Activated B cell treated with CpG ODN at 0.5 μM for 24 hours (primary cell): ENCODE measurements at regions of chr2 and their contacts with region 1.

Region 1: DNA sequence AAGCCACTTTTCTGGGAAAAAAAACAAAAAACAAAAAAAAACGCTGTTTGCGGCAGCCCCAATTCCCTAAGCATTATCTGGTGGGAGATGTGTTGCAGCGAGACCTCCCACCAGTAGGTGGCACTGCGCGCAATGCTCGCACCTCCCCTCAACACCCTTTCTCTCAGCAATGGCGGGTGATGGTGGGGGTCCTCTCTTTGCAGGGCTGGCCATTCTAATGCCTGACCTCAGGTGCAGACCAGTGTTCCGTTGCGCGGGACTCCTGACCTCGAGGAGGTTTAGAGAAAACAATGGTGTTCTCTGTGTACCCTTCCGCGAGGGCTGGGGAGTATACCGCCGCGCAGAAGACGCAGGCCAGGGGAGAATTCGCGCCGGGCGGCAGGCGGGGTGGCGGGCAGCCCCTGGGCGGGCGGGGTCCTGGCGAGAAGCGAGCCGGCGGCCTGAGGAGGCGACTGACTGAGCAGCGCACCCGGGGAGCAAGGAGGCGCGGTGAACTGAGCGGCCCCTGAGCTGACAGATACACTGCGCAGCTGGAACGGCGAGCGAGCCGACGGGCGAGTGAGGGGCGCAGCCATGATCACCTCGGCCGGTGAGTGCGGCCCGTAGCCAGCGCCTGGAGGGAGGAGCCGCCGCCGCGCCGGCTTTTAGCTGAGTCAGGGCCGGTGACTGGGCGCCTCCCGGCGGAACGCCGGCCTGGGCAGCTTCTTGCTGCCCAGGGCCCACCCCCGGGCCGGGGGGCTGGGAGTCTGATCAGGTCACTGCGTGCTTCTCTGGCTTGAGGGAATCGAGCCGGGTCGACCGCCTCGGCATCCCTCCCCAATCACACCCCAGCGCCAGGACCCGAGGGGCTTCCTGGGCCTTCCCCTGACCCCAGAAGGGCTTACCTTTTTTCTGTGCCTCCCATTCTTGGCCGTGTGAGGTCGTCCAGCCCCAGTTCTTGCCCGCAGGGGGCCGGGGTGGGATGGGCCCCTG is at the start of gene PSMD1:
- DNase-seq: peak; percentile 90
- ATAC-seq: peak; percentile 85
- H3K4me3 Mint-ChIP-seq: peak within 1 kb of the TSS; percentile 98
- H3K27ac Mint-ChIP-seq: peak within 1 kb of the TSS; percentile 100
- H3K4me1 Mint-ChIP-seq: peaks cover 43% of the 10 kb centered on the region
- H3K27me3 Mint-ChIP-seq: peaks cover 3% of the 10 kb centered on the region
- CTCF ChIP-seq: peak; percentile 65
- total RNA-seq, gene PSMD1: 99.9 and 105 TPM in 2 replicates

Region 2: DNA sequence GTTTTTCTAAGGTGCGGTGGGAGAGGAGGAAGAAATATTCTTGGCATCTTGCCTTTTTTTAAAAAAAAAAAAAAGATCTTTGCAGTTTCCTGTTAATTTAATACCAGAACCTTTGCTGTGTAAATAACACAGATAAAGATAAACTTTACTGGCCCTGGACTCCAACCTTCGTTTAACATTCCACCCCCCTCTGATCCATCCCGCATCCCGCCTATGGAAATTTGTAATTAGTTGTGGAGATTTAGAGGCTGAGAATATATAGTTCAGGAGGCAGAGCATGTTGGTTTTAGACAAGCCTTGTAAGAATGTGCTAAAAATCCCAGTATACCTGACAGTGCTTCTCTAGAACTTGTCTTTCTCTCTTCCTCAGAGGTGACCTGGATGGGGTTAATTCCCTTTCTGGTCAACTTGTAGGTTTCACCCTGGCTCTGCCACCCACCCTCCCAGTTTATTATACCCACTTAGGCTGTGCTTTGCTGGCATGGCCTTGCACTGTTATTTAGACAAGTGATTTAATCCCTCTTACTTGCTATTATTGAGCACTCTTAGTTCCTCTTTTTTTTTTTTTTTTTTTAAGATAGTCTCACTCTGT is 22.4 kb before region 1 on chr2:
- CTCF ChIA-PET with region 1: interaction called, 10 read pairs
- POLR2A ChIA-PET with region 1: interaction called, 4 read pairs
- intact Hi-C with region 1: no loop called
- DNase-seq: no peak
- ATAC-seq: peak; percentile 61
- H3K4me3 Mint-ChIP-seq: no peak overlapping the region
- H3K27ac Mint-ChIP-seq: peak overlapping the region; percentile 30
- H3K4me1 Mint-ChIP-seq: peaks cover 14% of the 10 kb centered on the region
- H3K27me3 Mint-ChIP-seq: peaks cover 32% of the 10 kb centered on the region
- CTCF ChIP-seq: no peak

Region 3: DNA sequence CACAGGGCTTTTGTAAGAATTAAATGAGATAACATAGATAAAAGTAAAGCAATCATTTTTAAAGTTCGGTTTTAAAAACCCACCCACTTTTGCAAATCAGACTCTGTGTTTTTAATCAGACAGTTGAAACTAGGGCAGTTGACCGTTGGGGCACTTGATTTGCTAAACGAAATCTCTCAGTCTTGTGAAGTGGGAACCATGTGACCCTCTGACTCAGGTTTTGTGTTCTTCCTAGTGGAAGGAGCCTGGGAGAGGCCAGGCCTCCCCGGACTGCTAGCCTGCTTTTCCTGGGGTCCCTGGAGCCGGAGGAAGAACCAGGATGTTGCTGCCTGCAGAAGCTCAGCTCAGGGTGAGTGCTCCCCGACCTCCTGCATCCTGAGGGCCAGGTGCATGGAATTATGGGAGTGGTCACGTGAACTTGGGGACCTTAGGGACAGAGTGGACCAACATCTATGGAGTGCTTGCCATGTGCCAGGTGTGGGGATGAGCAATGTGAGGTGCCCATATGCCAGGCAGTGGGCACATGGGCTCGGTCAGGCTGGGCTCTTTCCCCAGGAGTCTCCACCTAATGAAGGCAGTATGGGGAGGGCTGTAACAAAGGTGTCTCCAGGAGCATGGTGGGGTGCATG is 15.6 kb before region 1 on chr2:
- CTCF ChIA-PET with region 1: interaction called, 17 read pairs
- POLR2A ChIA-PET with region 1: interaction called, 4 read pairs
- intact Hi-C with region 1: no loop called
- DNase-seq: no peak
- ATAC-seq: no peak
- H3K4me3 Mint-ChIP-seq: no peak overlapping the region
- H3K27ac Mint-ChIP-seq: no peak overlapping the region
- H3K4me1 Mint-ChIP-seq: peaks cover 2% of the 10 kb centered on the region
- H3K27me3 Mint-ChIP-seq: peaks cover 43% of the 10 kb centered on the region
- CTCF ChIP-seq: no peak

Region 4: DNA sequence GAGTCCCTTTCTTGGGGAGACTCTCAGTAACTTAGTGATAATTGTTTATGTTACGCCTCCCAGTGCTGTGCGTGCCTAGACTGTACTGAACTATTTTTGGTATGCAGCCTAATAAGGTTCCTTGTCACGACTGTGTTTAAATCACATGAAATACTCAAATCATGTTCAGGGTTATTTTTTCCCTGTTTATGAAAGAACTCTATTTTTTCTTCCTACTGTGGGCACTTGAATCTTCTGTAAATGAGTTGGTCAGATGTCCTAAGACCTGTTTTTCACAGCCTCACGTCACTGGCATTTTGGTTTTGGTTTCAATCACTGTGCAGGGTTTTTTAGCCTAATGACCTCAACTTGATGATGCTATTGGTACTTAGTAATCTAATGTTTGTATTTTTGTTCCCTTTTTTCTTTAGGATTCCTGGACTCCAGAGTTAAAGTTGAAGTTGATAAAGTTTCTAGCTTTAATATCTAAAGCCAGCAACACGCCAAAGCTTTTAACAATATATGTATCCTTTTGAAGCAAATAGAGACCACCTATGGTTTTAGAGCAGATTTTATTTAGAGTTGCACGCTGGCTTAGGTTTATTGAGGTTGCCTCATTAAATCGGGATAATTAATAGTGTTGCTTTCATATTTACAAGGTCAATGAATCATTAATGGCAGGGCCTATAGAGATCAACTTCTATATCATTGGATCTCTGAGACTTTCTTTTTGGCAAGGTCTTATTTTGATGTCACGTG is 165.7 kb after region 1 on chr2:
- CTCF ChIA-PET with region 1: no interaction called
- POLR2A ChIA-PET with region 1: no interaction called
- intact Hi-C with region 1: no loop called
- DNase-seq: no peak
- ATAC-seq: no peak
- H3K4me3 Mint-ChIP-seq: no peak overlapping the region
- H3K27ac Mint-ChIP-seq: no peak overlapping the region
- H3K4me1 Mint-ChIP-seq: peaks cover 2% of the 10 kb centered on the region
- H3K27me3 Mint-ChIP-seq: no peaks in the 10 kb centered on the region
- CTCF ChIP-seq: no peak